A549 (cell line): ENCODE measurements at regions of chr2 and their contacts with region 1.

Region 1: DNA sequence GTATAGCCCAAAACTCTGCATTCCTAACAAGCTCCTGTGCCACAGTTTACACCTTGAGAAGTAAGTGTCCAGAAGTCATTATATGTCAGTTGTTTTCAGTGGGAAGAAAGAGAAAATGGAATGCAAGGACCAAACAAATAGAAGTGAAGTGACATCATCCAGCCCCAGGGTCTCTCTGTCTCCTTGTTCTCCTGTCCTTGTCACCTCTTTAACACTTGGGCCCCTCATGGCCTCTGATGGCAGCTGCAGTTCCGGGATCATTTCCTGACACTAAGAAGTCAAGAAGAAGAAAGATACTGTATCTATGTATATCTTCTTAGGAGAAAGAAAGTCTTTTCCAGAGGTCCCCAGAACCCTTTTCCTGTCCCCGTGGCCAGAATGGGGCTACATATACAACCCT is 2.8 kb upstream of the CFAP221 start:
- DNase-seq: no peak
- ATAC-seq: no peak
- H3K4me3 ChIP-seq: no peak overlapping the region
- H3K27ac ChIP-seq: no peak overlapping the region
- H3K4me1 ChIP-seq: peaks cover 9% of the 10 kb centered on the region
- CTCF ChIP-seq: no peak
- EP300 ChIP-seq: no peak
- POLR2A ChIP-seq: no peak
- RAD21 ChIP-seq: no peak

Region 2: GRCh38 chr2:119531292-119531691 is 10.2 kb before region 1 on chr2:
- CTCF ChIA-PET with region 1: interaction called, 11 read pairs
- POLR2A ChIA-PET with region 1: no interaction called
- DNase-seq: peak in 1 of 2 experiments; percentile 46
- ATAC-seq: peak; percentile 66 to 76
- H3K4me3 ChIP-seq: no peak overlapping the region
- H3K27ac ChIP-seq: no peak overlapping the region
- H3K4me1 ChIP-seq: no peaks in the 10 kb centered on the region
- CTCF ChIP-seq: peak; percentile 26; the same call in 2 of the 3 replicates
- EP300 ChIP-seq: no peak
- POLR2A ChIP-seq: no peak
- RAD21 ChIP-seq: peak; percentile 36 to 47; a peak in 3 of 5 replicates

Region 3: GRCh38 chr2:119553687-119554344 is 12.3 kb after region 1 on chr2:
- CTCF ChIA-PET with region 1: no interaction called
- POLR2A ChIA-PET with region 1: no interaction called
- DNase-seq: no peak
- ATAC-seq: no peak
- H3K4me3 ChIP-seq: no peak overlapping the region
- H3K27ac ChIP-seq: no peak overlapping the region
- H3K4me1 ChIP-seq: peaks cover 4% of the 10 kb centered on the region; the same call in 1 of the 3 replicates
- CTCF ChIP-seq: no peak
- EP300 ChIP-seq: no peak
- POLR2A ChIP-seq: no peak
- RAD21 ChIP-seq: no peak